Panc1 (cell line): ENCODE measurements at regions of chr10 and their contacts with region 1.

Region 1: GRCh38 chr10:60114765-60115586 is 208.6 kb upstream of the CCDC6 start:
- DNase-seq: no peak
- ATAC-seq: no peak
- H3K4me3 ChIP-seq: no peak overlapping the region
- H3K27ac ChIP-seq: no peak overlapping the region
- H3K4me1 ChIP-seq: no peaks in the 10 kb centered on the region
- H3K27me3 ChIP-seq: no peaks in the 10 kb centered on the region; the same call in 1 of the 2 replicates
- CTCF ChIP-seq: peak; percentile 69

Region 2: GRCh38 chr10:60048091-60048501 is 66.9 kb before region 1 on chr10:
- CTCF ChIA-PET with region 1: no interaction called
- POLR2A ChIA-PET with region 1: no interaction called
- in situ Hi-C with region 1: no loop called
- intact Hi-C with region 1: loop called (anchors 10 kb)
- DNase-seq: no peak
- ATAC-seq: 0 out of 2 replicates have a peak, but pooled peaks have one; percentile 56
- H3K4me3 ChIP-seq: no peak overlapping the region
- H3K27ac ChIP-seq: no peak overlapping the region
- H3K4me1 ChIP-seq: no peaks in the 10 kb centered on the region
- H3K27me3 ChIP-seq: peaks cover 18% of the 10 kb centered on the region
- CTCF ChIP-seq: peak; percentile 50